ENCODE measurements at regions of chr1 and their contacts with region 1.

Region 1: GRCh38 chr1:101309334-101310311 is 72.8 kb downstream of the S1PR1 start:
- DNase-seq: peak in 1 of 2 donors; percentile 86
- H3K4me3 ChIP-seq: no peak overlapping the region
- CTCF ChIP-seq: no peak
- POLR2A ChIP-seq: no peak

Region 2: GRCh38 chr1:101002551-101002950 is 307.1 kb before region 1 on chr1:
- intact Hi-C with region 1: no loop called
- DNase-seq: no peak
- H3K4me3 ChIP-seq: no peak overlapping the region
- CTCF ChIP-seq: no peak
- POLR2A ChIP-seq: no peak

Region 3: GRCh38 chr1:101357444-101357986 is 47.9 kb after region 1 on chr1:
- intact Hi-C with region 1: loop called (anchors 10 kb)
- DNase-seq: peak in 1 of 2 donors; percentile 72
- H3K4me3 ChIP-seq: no peak overlapping the region
- CTCF ChIP-seq: peak in 1 of 3 donors; percentile 50
- POLR2A ChIP-seq: no peak